ENCODE measurements at regions of chr4 and their contacts with region 1.

Region 1: GRCh38 chr4:39365830-39366771 is at the start of gene RFC1:
- DNase-seq: peak; percentile 94 to 97
- ATAC-seq: peak; percentile 95 to 98 (median 97)
- H3K4me3 ChIP-seq: peak within 1 kb of the TSS; percentile 95
- H3K4me3 Mint-ChIP-seq: peak within 1 kb of the TSS; percentile 93
- H3K27ac ChIP-seq: peak within 1 kb of the TSS; percentile 59
- H3K27ac Mint-ChIP-seq: peak within 1 kb of the TSS; percentile 89 to 97
- H3K4me1 ChIP-seq: peaks cover 14% of the 10 kb centered on the region
- H3K4me1 Mint-ChIP-seq: peaks cover 27 to 38% of the 10 kb centered on the region in 2 donors
- H3K27me3 ChIP-seq: no peaks in the 10 kb centered on the region
- H3K27me3 Mint-ChIP-seq: no peaks in the 10 kb centered on the region
- CTCF ChIP-seq: no peak
- total RNA-seq, gene RFC1: 74.6 to 103 (median 84.7) TPM

Region 2: DNA sequence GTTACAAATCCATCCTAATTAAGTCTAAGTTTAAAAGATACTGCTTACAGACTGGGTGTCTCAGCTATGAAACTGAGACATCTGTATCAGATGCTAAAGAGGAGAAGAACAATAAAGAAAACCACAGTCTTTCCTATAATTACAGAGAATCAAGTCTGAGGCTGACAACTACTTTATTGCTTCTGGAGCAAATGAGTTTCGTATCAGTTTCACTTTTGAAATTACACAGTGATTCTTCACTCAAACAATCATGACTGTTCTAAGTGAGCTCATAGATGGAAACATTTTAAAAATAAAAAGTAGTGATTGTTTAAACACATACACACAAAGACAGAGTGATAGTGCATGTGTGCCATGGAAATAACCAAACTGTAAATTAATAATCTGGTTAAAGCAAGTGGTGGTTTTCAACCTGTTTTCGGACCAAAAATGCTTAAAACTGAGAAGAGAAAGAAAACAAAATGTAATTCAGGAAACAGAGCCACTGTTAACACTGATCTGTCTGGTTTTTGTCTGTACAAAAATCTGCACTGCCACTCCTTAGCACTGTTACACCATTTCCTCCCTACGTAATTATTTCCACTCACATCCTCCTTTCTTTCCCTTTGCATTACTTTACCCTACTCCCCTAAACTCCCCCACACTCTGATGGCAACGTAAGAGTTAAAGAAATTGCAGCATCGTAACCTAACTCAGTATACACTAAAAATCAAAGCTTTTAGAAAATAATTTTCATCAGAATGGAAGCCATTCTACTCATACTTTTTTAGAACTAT is 12.4 kb before region 1 on chr4:
- intact Hi-C with region 1: loop called (anchors 1 kb)
- DNase-seq: peak in 1 of 2 donors; percentile 71
- ATAC-seq: peak; percentile 79 to 84 (median 82)
- H3K4me3 ChIP-seq: peak overlapping the region; percentile 41
- H3K4me3 Mint-ChIP-seq: peak overlapping the region; percentile 88
- H3K27ac ChIP-seq: peak overlapping the region; percentile 98
- H3K27ac Mint-ChIP-seq: peak overlapping the region; percentile 99
- H3K4me1 ChIP-seq: peaks cover 11% of the 10 kb centered on the region
- H3K4me1 Mint-ChIP-seq: peaks cover 45 to 47% of the 10 kb centered on the region in 2 donors
- H3K27me3 ChIP-seq: no peaks in the 10 kb centered on the region
- H3K27me3 Mint-ChIP-seq: no peaks in the 10 kb centered on the region
- CTCF ChIP-seq: no peak

Region 3: DNA sequence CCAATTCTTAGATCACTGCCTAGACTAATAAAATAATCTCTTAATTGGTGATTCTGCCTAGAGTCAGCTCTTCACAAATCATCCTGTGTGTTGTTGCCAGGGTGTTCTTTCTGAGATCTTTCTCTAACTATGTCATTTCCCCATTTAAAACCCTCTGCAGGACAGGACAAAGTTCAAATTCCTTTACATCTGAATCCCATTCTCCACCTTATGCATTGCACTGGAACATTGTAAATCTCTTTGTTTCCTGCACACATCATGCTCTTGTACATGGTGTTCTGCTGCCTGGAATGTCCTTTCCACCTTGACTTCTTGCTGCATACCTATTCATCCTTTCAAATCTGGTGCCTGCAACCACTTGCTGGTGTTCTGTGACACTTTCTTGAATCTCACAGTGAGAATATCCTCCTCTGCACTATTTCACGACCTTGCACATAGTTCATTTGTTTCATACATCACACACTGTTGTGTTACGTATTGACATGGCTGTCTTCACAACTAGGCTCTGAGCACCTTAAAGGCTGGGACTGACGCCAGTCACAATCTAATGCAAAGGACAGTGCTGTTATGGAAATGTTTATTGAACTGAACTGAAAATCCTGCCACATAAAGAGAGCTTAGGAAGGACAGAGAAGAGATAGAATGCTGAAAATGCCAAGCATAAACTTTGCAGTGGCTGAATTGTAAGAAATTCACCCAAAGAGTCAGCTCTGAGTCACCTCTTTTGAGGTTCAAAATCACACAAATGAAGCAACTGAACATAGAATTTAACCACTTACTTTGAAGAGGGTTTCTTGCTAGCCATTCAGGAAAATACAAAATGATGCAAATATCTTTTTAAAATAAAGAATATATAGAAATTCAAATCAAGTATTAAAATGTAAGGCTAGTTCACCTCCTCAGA is 299.0 kb after region 1 on chr4:
- intact Hi-C with region 1: no loop called
- DNase-seq: no peak
- ATAC-seq: no peak
- H3K4me3 ChIP-seq: no peak overlapping the region
- H3K4me3 Mint-ChIP-seq: no peak overlapping the region
- H3K27ac ChIP-seq: no peak overlapping the region
- H3K27ac Mint-ChIP-seq: no peak overlapping the region
- H3K4me1 ChIP-seq: no peaks in the 10 kb centered on the region
- H3K4me1 Mint-ChIP-seq: no peaks in the 10 kb centered on the region
- H3K27me3 ChIP-seq: no peaks in the 10 kb centered on the region
- H3K27me3 Mint-ChIP-seq: peaks cover 0 to 9% of the 10 kb centered on the region in 2 donors
- CTCF ChIP-seq: no peak

Measured in natural killer cell (primary cell).